IMR-90 (cell line): ENCODE measurements at regions of chr7 and their contacts with region 1.

Region 1: GRCh38 chr7:158818325-158819213 is 10.7 kb downstream of the ESYT2 start:
- DNase-seq: peak; percentile 96
- ATAC-seq: peak; percentile 91
- H3K4me3 ChIP-seq: peak overlapping the region; percentile 22
- H3K27ac ChIP-seq: peak overlapping the region; percentile 92
- H3K4me1 ChIP-seq: peaks cover 23% of the 10 kb centered on the region
- H3K27me3 ChIP-seq: no peaks in the 10 kb centered on the region
- CTCF ChIP-seq: peak; percentile 13; the same call in 1 of the 2 replicates
- POLR2A ChIP-seq: peak; percentile 66; the same call in 1 of the 2 replicates
- RAD21 ChIP-seq: peak; percentile 38; the same call in 1 of the 2 replicates

Region 2: DNA sequence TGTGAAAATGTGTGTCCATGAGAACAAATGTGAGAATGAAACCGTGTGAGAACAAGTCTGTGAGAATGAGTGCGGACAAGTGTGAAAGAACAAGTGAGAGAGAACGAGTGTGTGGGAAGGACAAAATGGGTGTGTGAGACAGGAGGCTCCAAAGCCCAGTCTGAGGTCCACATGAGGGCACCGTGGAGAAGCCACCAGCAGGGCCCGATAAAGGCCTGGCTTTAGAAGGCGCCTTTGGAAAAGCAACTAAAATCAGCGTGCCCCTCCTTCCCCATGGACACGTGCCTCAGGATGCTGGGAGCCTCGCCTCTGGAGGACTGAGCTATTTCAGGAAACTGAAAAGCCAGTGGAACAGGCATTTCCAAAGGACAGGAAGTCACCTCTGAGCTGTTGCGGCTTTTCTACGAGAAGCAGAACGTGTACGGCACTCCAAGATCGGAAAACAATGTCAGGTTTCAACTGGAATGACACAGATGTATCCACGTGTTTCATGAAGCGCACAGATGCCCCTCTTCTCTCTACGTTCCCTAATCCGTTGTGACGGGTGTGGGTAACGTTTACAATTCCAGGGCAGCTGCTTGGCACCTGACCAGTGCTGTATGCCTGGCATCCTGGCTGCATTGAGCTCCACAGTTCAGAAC is 35.7 kb before region 1 on chr7:
- CTCF ChIA-PET with region 1: no interaction called
- POLR2A ChIA-PET with region 1: no interaction called
- dilution Hi-C with region 1: no loop called
- in situ Hi-C with region 1: no loop called
- intact Hi-C with region 1: loop called (anchors 2 kb)
- DNase-seq: peak; percentile 12
- ATAC-seq: no peak
- H3K4me3 ChIP-seq: no peak overlapping the region
- H3K27ac ChIP-seq: no peak overlapping the region
- H3K4me1 ChIP-seq: peaks cover 9% of the 10 kb centered on the region
- H3K27me3 ChIP-seq: no peaks in the 10 kb centered on the region
- CTCF ChIP-seq: peak; percentile 33; the same call in 1 of the 2 replicates
- POLR2A ChIP-seq: no peak
- RAD21 ChIP-seq: peak; percentile 57

Region 3: GRCh38 chr7:158802473-158803202 is 15.9 kb before region 1 on chr7:
- CTCF ChIA-PET with region 1: interaction called, 3 read pairs
- POLR2A ChIA-PET with region 1: no interaction called
- dilution Hi-C with region 1: no loop called
- in situ Hi-C with region 1: no loop called
- intact Hi-C with region 1: loop called (anchors 2 kb)
- DNase-seq: peak; percentile 56
- ATAC-seq: peak; percentile 82
- H3K4me3 ChIP-seq: no peak overlapping the region
- H3K27ac ChIP-seq: peak overlapping the region; percentile 81
- H3K4me1 ChIP-seq: peaks cover 7% of the 10 kb centered on the region
- H3K27me3 ChIP-seq: no peaks in the 10 kb centered on the region
- CTCF ChIP-seq: no peak
- POLR2A ChIP-seq: no peak
- RAD21 ChIP-seq: no peak